ENCODE measurements at regions of chr19 and their contacts with region 1.

Region 1: DNA sequence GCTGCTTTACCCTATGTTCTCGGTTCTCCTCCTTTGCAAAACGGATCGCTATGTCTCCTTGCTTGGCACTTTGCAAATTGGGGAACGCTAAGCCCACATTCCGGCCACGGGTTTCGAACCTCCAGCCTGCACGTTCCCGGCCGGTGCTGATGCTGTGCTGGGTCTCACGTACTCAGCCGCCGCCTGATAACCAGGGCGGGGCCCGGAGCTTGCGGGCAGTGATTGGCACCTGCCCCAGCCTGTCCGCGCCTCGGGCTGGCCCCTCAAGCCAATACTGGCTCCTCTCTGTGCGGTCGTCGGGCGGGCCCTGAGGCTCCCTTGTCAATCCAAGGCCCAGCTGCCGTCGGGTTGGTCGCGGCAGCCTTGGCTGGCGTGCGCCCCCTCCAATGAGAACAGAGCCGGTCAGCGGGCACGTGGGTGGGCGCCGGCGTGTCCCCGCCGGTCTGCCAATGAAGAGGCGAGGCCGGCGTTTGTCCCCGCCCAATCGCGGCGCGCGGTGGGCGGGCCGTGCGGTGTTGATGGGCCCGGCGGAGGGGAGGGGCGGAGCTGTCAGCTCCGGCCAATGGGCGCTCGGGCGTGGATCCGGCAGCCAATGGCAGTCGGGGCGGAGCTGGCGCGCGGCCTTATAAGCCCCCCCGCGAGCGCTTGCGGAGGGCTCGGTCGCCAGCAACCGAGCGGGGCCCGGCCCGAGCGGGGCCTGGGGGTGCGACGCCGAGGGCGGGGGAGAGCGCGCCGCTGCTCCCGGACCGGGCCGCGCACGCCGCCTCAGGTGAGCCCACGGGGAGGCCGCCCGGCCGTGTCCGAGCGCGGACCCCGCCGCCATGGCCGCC is at the start of gene KDM4B:
- DNase-seq: peak; percentile 99 to 100 (median 100)
- ATAC-seq: peak; percentile 95 to 98 (median 98)
- H3K4me3 ChIP-seq: peak within 1 kb of the TSS; percentile 54 to 92 (median 69)
- H3K27ac ChIP-seq: peak within 1 kb of the TSS; percentile 8 to 87 (median 69)
- H3K4me1 ChIP-seq: peaks cover 0 to 46% (median 33%) of the 10 kb centered on the region in 12 donors
- H3K27me3 ChIP-seq: no peaks in the 10 kb centered on the region
- CTCF ChIP-seq: no peak
- POLR2A ChIP-seq: peak; percentile 97
- total RNA-seq, gene KDM4B: 21.5 to 36.5 (median 28.1) TPM

Region 2: GRCh38 chr19:4457654-4458395 is 510.9 kb before region 1 on chr19 and contains the start of gene UBXN6:
- intact Hi-C with region 1: loop called in 1 of 10 experiments (anchors 5 kb)
- DNase-seq: peak; percentile 97 to 100 (median 98)
- ATAC-seq: peak; percentile 85 to 93 (median 90)
- H3K4me3 ChIP-seq: peak within 1 kb of the TSS; percentile 53 to 96 (median 70)
- H3K27ac ChIP-seq: peak within 1 kb of the TSS; percentile 30 to 96 (median 89)
- H3K4me1 ChIP-seq: peaks cover 0 to 33% (median 20%) of the 10 kb centered on the region in 12 donors
- H3K27me3 ChIP-seq: no peaks in the 10 kb centered on the region
- CTCF ChIP-seq: peak in 2 of 12 donors; percentile 9 to 13
- POLR2A ChIP-seq: no peak
- total RNA-seq, gene UBXN6: 75.1 to 128 (median 109) TPM

Region 3: DNA sequence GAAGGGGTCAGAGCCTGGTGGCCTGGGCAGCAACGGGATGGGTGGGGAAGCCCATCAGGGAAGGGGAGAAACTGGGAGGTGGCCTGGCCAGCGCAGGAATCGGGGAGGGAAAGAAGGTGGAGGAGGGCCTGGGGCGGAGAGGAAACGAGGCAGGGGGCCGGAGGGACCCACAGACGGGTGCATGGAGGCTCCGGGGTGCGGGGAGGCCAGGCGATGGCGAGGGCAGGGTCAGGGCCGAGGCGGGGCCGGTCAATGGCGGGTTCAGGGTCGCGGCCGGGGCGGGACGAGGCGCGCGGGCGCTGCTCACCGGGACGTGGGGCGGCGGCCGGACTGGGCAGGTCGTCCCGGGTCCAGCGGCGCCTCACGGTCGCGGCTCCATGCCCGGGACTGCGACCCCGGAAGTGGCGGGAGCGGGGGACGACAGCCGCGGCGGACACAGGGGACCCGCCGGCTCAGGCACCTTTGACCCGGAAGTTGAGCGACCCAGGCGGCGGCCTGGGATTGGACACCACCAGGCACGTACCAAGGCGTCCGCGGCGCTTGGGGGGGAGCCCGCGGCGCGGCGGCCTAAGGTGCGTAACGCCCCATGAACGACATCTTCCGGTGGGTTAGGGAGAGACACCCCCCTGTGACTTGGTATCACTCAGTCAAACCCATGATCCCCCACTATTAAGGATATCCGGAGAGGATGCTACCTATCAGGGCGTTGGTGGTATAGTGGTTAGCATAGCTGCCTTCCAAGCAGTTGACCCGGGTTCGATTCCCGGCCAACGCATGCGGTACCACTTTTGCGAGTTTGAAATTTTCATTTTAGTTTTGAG is 245.1 kb before region 1 on chr19 and contains the start of gene DPP9:
- intact Hi-C with region 1: loop called in 1 of 10 experiments (anchors 5 kb)
- DNase-seq: peak; percentile 97 to 99 (median 98)
- ATAC-seq: peak; percentile 96 to 97 (median 96)
- H3K4me3 ChIP-seq: peak within 1 kb of the TSS; percentile 75 to 99 (median 94)
- H3K27ac ChIP-seq: peak within 1 kb of the TSS; percentile 83 to 97 (median 93)
- H3K4me1 ChIP-seq: peaks cover 0 to 43% (median 16%) of the 10 kb centered on the region in 12 donors
- H3K27me3 ChIP-seq: no peaks in the 10 kb centered on the region
- CTCF ChIP-seq: peak in 9 of 12 donors; percentile 25 to 55 (median 32)
- POLR2A ChIP-seq: peak in 1 of 2 donors; percentile 72
- total RNA-seq, gene DPP9: 38.9 to 65.2 (median 47.7) TPM

Region 4: GRCh38 chr19:4815426-4816201 is 153.1 kb before region 1 on chr19:
- intact Hi-C with region 1: loop called in 1 of 10 experiments (anchors 5 kb)
- DNase-seq: peak; percentile 89 to 94 (median 93)
- ATAC-seq: peak; percentile 87 to 94 (median 92)
- H3K4me3 ChIP-seq: peak overlapping the region in 8 of 12 donors; percentile 0 to 44 (median 28)
- H3K27ac ChIP-seq: peak overlapping the region in 6 of 12 donors; percentile 12 to 66 (median 23)
- H3K4me1 ChIP-seq: peaks cover 0 to 36% (median 19%) of the 10 kb centered on the region in 12 donors
- H3K27me3 ChIP-seq: no peaks in the 10 kb centered on the region
- CTCF ChIP-seq: no peak
- POLR2A ChIP-seq: no peak

Region 5: GRCh38 chr19:4867534-4868285 is 101.0 kb before region 1 on chr19 and contains the start of gene PLIN3:
- intact Hi-C with region 1: loop called in 2 of 10 experiments (anchors 5 kb)
- DNase-seq: peak; percentile 97 to 98 (median 97)
- ATAC-seq: peak; percentile 96 to 99 (median 98)
- H3K4me3 ChIP-seq: peak within 1 kb of the TSS; percentile 53 to 92 (median 80)
- H3K27ac ChIP-seq: peak within 1 kb of the TSS in 11 of 12 donors; percentile 55 to 93 (median 82)
- H3K4me1 ChIP-seq: peaks cover 0 to 35% (median 9%) of the 10 kb centered on the region in 12 donors
- H3K27me3 ChIP-seq: no peaks in the 10 kb centered on the region
- CTCF ChIP-seq: no peak
- POLR2A ChIP-seq: peak in 1 of 2 donors; percentile 66
- total RNA-seq, gene PLIN3: 17.4 to 70.9 (median 22.9) TPM

Region 6: GRCh38 chr19:5001615-5002014 is 32.9 kb after region 1 on chr19:
- intact Hi-C with region 1: no loop called
- DNase-seq: peak in 1 of 5 donors; percentile 18
- ATAC-seq: no peak
- H3K4me3 ChIP-seq: no peak overlapping the region
- H3K27ac ChIP-seq: no peak overlapping the region
- H3K4me1 ChIP-seq: peaks cover 0 to 11% (median 0%) of the 10 kb centered on the region in 12 donors
- H3K27me3 ChIP-seq: no peaks in the 10 kb centered on the region
- CTCF ChIP-seq: peak; percentile 36 to 64 (median 46)
- POLR2A ChIP-seq: no peak

Region 7: GRCh38 chr19:5018224-5019015 is 49.7 kb after region 1 on chr19:
- intact Hi-C with region 1: loop called in 4 of 10 experiments (anchors 5 to 10 kb)
- DNase-seq: no peak
- ATAC-seq: no peak
- H3K4me3 ChIP-seq: no peak overlapping the region
- H3K27ac ChIP-seq: no peak overlapping the region
- H3K4me1 ChIP-seq: peaks cover 0 to 14% (median 9%) of the 10 kb centered on the region in 12 donors
- H3K27me3 ChIP-seq: no peaks in the 10 kb centered on the region
- CTCF ChIP-seq: no peak
- POLR2A ChIP-seq: no peak

Measured in heart left ventricle (tissue), 16 donors.